T-cell (primary cell): ENCODE measurements at regions of chr3 and their contacts with region 1.

Region 1: GRCh38 chr3:115169808-115170207 is 22.7 kb upstream of the ZBTB20 start:
- DNase-seq: peak in 1 of 35 experiments; percentile 27
- ATAC-seq: no peak
- H3K4me3 ChIP-seq: no peak overlapping the region
- H3K4me3 Mint-ChIP-seq: no peak overlapping the region
- H3K27ac ChIP-seq: no peak overlapping the region
- H3K27ac Mint-ChIP-seq: no peak overlapping the region
- H3K4me1 ChIP-seq: peaks cover 9 to 10% of the 10 kb centered on the region in 2 experiments
- H3K4me1 Mint-ChIP-seq: peaks cover 12 to 13% (median 12%) of the 10 kb centered on the region in 3 donors
- H3K27me3 ChIP-seq: no peaks in the 10 kb centered on the region
- H3K27me3 Mint-ChIP-seq: no peaks in the 10 kb centered on the region

Region 2: GRCh38 chr3:113844622-113845222 is 1325.1 kb before region 1 on chr3:
- CTCF ChIA-PET with region 1: interaction called in 1 of 2 experiments, 14 read pairs
- POLR2A ChIA-PET with region 1: no interaction called
- DNase-seq: peak in 1 of 35 experiments; percentile 50
- ATAC-seq: peak in 1 of 4 experiments; percentile 42
- H3K4me3 ChIP-seq: no peak overlapping the region
- H3K4me3 Mint-ChIP-seq: no peak overlapping the region
- H3K27ac ChIP-seq: no peak overlapping the region
- H3K27ac Mint-ChIP-seq: no peak overlapping the region
- H3K4me1 ChIP-seq: no peaks in the 10 kb centered on the region
- H3K4me1 Mint-ChIP-seq: no peaks in the 10 kb centered on the region
- H3K27me3 ChIP-seq: no peaks in the 10 kb centered on the region
- H3K27me3 Mint-ChIP-seq: no peaks in the 10 kb centered on the region

Region 3: DNA sequence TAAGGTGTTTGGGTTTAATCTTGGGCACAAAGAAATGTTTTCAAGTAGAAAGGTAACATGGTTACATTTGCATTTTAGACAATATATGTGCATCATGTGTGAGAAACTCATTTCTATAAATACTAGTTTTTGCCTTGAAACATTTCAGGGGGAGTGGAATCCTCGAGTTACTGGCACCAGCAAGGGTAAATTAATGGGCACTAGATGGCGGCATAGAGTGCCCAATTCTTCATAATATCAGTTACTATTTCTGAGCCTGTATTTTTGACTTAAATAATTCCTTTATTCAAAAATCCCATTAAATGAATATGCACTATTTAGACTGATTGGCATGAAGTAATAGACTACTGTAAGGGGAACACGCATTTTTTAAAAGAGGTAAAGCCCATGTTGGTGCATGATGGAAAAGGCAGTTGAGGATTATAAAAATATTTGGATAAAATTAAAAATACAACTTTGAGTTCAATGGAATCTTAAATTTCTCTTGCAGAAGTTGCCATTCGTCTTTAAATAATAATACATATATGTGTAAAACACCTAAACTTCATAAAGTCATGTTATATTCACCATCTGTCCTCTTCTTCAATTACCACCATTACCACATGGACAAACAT is 129.0 kb before region 1 on chr3:
- CTCF ChIA-PET with region 1: interaction called, 7 to 15 read pairs
- POLR2A ChIA-PET with region 1: interaction called in 1 of 2 experiments, 4 read pairs
- DNase-seq: peak in 29 of 35 experiments; percentile 2 to 65 (median 25)
- ATAC-seq: peak in 3 of 4 experiments; percentile 49 to 55 (median 51)
- H3K4me3 ChIP-seq: no peak overlapping the region
- H3K4me3 Mint-ChIP-seq: no peak overlapping the region
- H3K27ac ChIP-seq: no peak overlapping the region
- H3K27ac Mint-ChIP-seq: no peak overlapping the region
- H3K4me1 ChIP-seq: no peaks in the 10 kb centered on the region
- H3K4me1 Mint-ChIP-seq: peaks cover 11 to 32% (median 13%) of the 10 kb centered on the region in 3 donors
- H3K27me3 ChIP-seq: no peaks in the 10 kb centered on the region
- H3K27me3 Mint-ChIP-seq: no peaks in the 10 kb centered on the region

Region 4: DNA sequence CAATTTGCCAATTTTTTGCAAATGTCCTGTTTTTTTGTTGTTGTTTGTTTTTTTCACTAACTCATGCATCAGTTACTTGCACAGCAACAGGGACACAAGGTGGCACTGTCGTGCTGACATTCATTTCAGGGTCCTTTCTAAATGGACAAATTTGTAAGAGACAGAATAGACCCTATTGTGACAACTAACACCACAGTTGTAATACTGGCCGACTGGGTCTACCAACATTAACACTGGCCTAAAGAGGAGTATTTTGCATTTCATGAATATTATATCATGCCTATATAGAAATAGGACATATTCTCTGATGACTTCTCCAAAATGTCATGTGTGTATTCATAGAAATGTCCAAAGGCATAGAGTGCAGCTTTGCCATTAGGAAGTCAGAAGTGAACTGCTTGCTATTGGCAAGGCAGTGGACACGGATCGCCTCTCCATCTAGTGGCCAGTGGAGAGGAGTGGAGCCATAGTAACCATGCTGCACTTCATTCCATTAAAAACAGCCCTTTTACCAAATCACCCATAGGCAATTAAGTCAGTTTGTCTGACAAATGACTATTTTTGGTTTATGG is 77.5 kb before region 1 on chr3:
- CTCF ChIA-PET with region 1: interaction called, 78 to 81 read pairs
- POLR2A ChIA-PET with region 1: no interaction called
- DNase-seq: peak; percentile 13 to 79 (median 54)
- ATAC-seq: peak in 3 of 4 experiments; percentile 48 to 68 (median 52)
- H3K4me3 ChIP-seq: no peak overlapping the region
- H3K4me3 Mint-ChIP-seq: no peak overlapping the region
- H3K27ac ChIP-seq: no peak overlapping the region
- H3K27ac Mint-ChIP-seq: no peak overlapping the region
- H3K4me1 ChIP-seq: peaks cover 0 to 4% of the 10 kb centered on the region in 2 experiments
- H3K4me1 Mint-ChIP-seq: peaks cover 37 to 52% (median 43%) of the 10 kb centered on the region in 3 donors
- H3K27me3 ChIP-seq: no peaks in the 10 kb centered on the region
- H3K27me3 Mint-ChIP-seq: no peaks in the 10 kb centered on the region